Left cardiac atrium (tissue), 4 donors: ENCODE measurements at regions of chr1 and their contacts with region 1.

Region 1: DNA sequence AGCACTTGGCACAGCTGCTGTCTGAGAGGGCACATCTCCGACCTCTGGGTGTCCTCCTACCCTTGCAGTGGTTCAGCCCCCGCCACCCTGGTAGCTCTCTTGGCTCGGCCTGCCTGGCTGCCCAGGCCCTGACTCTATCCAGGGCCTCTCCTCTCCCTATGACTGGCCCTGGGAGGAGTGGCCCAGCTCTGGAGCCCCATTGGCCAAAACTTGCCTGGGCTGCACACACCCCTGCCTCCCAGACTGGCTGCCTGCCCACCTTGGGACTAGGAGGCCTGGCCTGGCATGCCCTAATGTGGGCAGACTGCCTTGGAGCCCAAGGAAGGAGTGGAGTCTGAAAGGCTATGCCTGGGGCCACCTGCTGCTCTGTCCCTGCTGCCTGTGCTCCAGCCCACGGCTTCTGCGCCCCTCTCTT is 33.6 kb downstream of the ACOT11 start:
- DNase-seq: peak; percentile 91
- ATAC-seq: peak; percentile 92 to 94

Region 2: DNA sequence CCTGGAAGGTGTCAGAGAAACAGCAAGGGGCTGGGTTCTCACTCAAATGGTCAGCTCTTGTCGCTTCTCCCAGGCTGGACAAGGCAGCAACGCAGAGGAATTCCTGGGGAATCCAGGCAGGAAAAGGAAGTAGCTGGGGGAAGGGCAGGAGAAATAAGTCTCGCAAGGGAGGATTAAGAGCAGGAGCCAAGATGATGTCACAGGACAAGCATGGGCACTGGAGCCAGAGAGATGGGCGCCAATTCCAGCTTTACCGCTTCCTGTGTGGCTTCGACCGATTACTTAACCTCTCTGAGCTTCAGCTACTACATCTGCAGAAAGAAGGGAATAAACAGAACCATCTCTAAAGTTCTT is 245.9 kb before region 1 on chr1:
- intact Hi-C with region 1: no loop called
- DNase-seq: peak; percentile 82
- ATAC-seq: peak; percentile 76 to 89

Region 3: GRCh38 chr1:54421101-54421504 is 160.5 kb before region 1 on chr1:
- intact Hi-C with region 1: no loop called
- DNase-seq: no peak
- ATAC-seq: no peak

Region 4: GRCh38 chr1:54547601-54548388 is 33.8 kb before region 1 on chr1 and contains the start of gene ACOT11:
- intact Hi-C with region 1: loop called in 1 of 2 experiments (anchors 5 kb)
- DNase-seq: peak; percentile 89
- ATAC-seq: peak; percentile 93 to 94
- total RNA-seq, gene ACOT11: 15.2 to 23.3 TPM